ENCODE measurements at regions of chr19 and their contacts with region 1.

Region 1: GRCh38 chr19:3163230-3163886 is 15.2 kb upstream of the S1PR4 start:
- DNase-seq: peak; percentile 46 to 85 (median 75)
- ATAC-seq: peak; percentile 97
- H3K4me3 ChIP-seq: no peak overlapping the region
- H3K4me3 Mint-ChIP-seq: no peak overlapping the region
- H3K27ac ChIP-seq: no peak overlapping the region
- H3K27ac Mint-ChIP-seq: peak overlapping the region; percentile 14
- H3K4me1 ChIP-seq: no peaks in the 10 kb centered on the region
- H3K4me1 Mint-ChIP-seq: peaks cover 14% of the 10 kb centered on the region
- H3K27me3 ChIP-seq: no peaks in the 10 kb centered on the region
- H3K27me3 Mint-ChIP-seq: no peaks in the 10 kb centered on the region
- CTCF ChIP-seq: peak; percentile 89

Region 2: DNA sequence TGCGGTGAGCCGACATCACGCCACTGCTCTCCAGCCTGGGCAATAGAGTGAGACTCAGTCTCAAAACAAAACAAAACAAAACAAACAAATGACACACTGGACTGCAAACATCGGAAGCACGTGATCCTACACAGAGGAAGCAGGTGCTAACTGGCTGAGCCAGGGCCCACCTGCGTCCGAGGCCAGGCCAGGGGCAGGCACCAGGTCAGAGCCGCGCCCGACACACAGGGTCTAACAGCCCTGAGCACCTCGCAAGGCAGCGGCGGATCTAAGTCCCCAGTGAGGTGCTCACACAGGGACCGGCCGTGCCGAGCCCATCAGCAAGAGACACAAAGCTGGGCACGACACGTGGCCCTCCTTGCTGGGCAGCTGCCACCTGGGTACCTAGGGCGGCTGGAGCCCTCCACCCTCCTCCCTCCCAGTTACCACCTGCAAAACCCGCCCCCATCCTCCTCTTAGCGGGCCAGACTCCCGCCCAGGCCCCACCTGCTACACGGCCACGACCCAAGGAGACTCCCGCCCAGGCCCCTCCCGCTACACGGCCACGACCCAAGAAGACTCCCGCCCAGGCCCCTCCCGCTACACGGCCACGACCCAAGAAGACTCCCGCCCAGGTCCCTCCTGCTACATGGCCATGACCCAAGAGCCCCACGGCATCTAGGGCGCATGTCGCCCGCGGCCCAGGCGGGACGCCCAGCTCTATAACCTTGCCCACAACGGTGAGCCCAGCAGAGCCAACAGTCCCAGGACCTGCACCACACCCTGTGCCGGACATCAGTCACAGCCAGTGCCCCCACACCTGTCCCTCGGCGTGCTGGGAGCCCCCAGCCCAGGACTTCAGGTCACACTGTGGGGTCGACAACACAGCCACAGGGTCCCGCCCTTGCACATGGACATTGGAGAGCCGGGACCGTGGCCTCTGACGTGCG is 1027.6 kb before region 1 on chr19:
- CTCF ChIA-PET with region 1: no interaction called
- POLR2A ChIA-PET with region 1: no interaction called
- intact Hi-C with region 1: no loop called
- DNase-seq: no peak
- ATAC-seq: no peak
- H3K4me3 ChIP-seq: no peak overlapping the region
- H3K4me3 Mint-ChIP-seq: no peak overlapping the region
- H3K27ac ChIP-seq: no peak overlapping the region
- H3K27ac Mint-ChIP-seq: no peak overlapping the region
- H3K4me1 ChIP-seq: no peaks in the 10 kb centered on the region
- H3K4me1 Mint-ChIP-seq: peaks cover 6% of the 10 kb centered on the region
- H3K27me3 ChIP-seq: no peaks in the 10 kb centered on the region
- H3K27me3 Mint-ChIP-seq: no peaks in the 10 kb centered on the region
- CTCF ChIP-seq: no peak

Region 3: DNA sequence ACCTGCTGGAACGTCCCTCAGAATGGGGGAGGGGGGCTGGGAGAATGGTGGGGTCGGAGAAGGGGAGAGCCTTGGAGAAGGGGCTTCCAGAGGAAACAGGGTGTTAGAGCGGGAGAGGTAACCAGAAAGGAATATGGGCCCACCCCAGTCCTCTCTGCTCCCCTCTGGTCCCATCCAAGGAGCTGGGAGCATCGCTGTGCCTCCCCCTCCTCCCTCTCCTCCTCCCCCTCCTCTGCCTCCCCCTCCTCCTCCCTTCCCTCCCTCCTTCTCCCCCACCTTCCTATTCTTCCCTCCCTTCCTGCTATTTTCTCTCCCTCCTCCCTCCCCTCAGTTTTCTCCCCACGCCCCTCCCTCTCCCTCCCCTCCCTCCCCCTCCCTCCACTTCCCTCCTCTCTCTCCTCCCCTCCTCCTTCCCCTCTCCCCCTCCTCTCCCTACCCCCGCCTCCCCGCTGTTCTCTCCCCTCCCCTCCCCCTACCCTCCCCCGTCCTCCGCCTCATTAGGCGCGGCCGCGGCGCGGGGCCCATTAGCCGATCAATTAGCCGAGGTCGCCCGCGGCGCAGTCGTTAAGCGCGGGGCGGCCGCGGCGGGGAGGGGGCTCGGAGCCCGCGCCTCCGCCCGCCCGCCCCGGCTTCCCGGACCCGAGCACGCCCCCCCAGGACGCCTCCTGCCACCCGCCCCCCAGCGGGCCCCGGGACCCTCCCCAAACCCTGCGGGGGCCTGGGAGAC is 116.5 kb before region 1 on chr19:
- CTCF ChIA-PET with region 1: no interaction called
- POLR2A ChIA-PET with region 1: no interaction called
- intact Hi-C with region 1: no loop called
- DNase-seq: peak in 1 of 9 experiments; percentile 28
- ATAC-seq: no peak
- H3K4me3 ChIP-seq: peak overlapping the region; percentile 41 to 43
- H3K4me3 Mint-ChIP-seq: peak overlapping the region; percentile 53
- H3K27ac ChIP-seq: no peak overlapping the region
- H3K27ac Mint-ChIP-seq: no peak overlapping the region
- H3K4me1 ChIP-seq: peaks cover 17% of the 10 kb centered on the region
- H3K4me1 Mint-ChIP-seq: peaks cover 21% of the 10 kb centered on the region
- H3K27me3 ChIP-seq: no peaks in the 10 kb centered on the region
- H3K27me3 Mint-ChIP-seq: no peaks in the 10 kb centered on the region
- CTCF ChIP-seq: no peak

Region 4: DNA sequence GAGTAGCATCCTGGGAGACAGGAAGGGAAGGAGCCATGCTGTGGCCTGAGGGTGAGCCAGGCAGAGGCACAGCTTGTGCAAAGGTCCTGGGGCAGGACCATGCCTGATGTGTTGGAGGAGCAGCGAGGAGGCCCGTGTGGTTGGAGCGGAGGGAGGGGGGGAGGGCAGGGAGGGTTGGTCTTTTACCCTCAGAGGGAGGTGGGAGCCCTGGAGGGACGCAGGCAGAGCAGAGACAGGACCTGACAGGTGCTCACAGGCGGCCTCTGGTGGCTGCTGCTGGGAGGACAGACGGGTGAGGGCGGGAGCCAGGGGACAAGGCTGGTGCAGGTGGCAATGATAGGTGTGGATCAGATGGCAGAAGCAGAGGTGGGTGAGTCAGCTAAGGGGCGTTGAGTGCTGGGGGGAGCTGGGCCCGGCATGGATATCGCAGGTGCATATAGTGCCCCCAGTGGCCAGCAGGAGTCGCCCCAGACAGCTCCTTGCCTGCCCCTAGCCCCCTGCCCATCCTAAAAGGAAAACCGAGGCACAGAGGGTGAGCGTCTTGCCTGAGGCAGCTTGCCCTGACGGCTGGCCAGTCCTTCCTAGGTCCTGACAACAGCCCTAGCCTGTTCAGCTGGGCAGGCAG is 37.3 kb before region 1 on chr19:
- CTCF ChIA-PET with region 1: interaction called, 104 read pairs
- POLR2A ChIA-PET with region 1: interaction called, 3 read pairs
- intact Hi-C with region 1: loop called (anchors 1 kb)
- DNase-seq: peak; percentile 58 to 80 (median 71)
- ATAC-seq: peak; percentile 97
- H3K4me3 ChIP-seq: no peak overlapping the region
- H3K4me3 Mint-ChIP-seq: no peak overlapping the region
- H3K27ac ChIP-seq: no peak overlapping the region
- H3K27ac Mint-ChIP-seq: no peak overlapping the region
- H3K4me1 ChIP-seq: no peaks in the 10 kb centered on the region
- H3K4me1 Mint-ChIP-seq: peaks cover 2% of the 10 kb centered on the region
- H3K27me3 ChIP-seq: peaks cover 0 to 3% of the 10 kb centered on the region in 2 experiments
- H3K27me3 Mint-ChIP-seq: peaks cover 2% of the 10 kb centered on the region
- CTCF ChIP-seq: peak; percentile 66

Measured in CD8-positive, alpha-beta T cell (primary cell).